H1 (cell line): ENCODE measurements at regions of chr17 and their contacts with region 1.

Region 1: GRCh38 chr17:29293890-29294579 is at the start of gene NUFIP2:
- DNase-seq: peak; percentile 96 to 100
- H3K4me3 ChIP-seq: peak within 1 kb of the TSS; percentile 90 to 99 (median 96)
- H3K27ac ChIP-seq: peak within 1 kb of the TSS; percentile 89
- H3K4me1 ChIP-seq: peaks cover 0 to 2% (median 0%) of the 10 kb centered on the region in 4 experiments; a peak in 1 of 7 replicates
- H3K27me3 ChIP-seq: no peaks in the 10 kb centered on the region; a peak in 1 of 7 replicates
- CTCF ChIP-seq: no peak
- EP300 ChIP-seq: peak in 1 of 2 experiments; percentile 70; a peak in 1 of 3 replicates
- POLR2A ChIP-seq: peak; percentile 99 to 100
- RAD21 ChIP-seq: no peak
- total RNA-seq, gene NUFIP2: 118 TPM in 2 replicates

Region 2: GRCh38 chr17:29252101-29252866 is 41.8 kb before region 1 on chr17:
- CTCF ChIA-PET with region 1: interaction called, 5 read pairs
- POLR2A ChIA-PET with region 1: interaction called, 27 read pairs
- DNase-seq: no peak
- H3K4me3 ChIP-seq: no peak overlapping the region
- H3K27ac ChIP-seq: no peak overlapping the region
- H3K4me1 ChIP-seq: peaks cover 0 to 3% (median 0%) of the 10 kb centered on the region in 4 experiments; a peak in 1 of 7 replicates
- H3K27me3 ChIP-seq: no peaks in the 10 kb centered on the region
- CTCF ChIP-seq: peak in 2 of 3 experiments; percentile 28 to 56; a peak in 2 of 4 replicates
- EP300 ChIP-seq: no peak
- POLR2A ChIP-seq: no peak
- RAD21 ChIP-seq: peak; percentile 37

Region 3: DNA sequence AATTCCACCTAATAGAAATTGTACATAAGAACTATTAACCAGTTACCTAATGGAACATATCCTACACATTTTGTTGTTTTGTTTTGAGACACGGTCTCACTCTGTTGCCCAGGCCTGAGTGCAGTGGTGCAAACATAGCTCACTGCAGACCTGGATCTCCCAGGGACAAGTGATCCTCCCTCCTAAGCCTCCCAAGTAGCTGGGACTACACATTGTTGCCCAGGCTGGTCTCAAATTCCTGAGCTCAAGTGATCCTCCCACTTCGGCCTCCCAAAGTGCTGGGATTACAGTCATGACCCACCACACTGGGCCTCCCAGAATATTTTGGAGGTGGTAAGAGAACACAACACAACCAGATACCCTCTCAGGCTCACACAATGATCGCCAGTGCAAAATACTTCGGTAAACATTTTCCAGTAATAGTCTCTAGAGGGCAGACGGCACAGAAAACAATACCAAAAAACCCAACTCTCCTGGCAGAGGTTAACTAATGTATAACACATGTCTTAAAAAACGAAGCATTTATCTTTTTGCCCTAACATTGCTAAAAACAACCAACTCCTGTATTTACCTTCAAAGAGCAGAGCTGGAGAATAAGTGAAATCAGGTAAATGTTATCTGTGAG is 10.7 kb before region 1 on chr17:
- CTCF ChIA-PET with region 1: interaction called, 23 read pairs
- POLR2A ChIA-PET with region 1: interaction called, 83 read pairs
- DNase-seq: no peak
- H3K4me3 ChIP-seq: peak overlapping the region in 1 of 4 experiments; percentile 1; a peak in 1 of 8 replicates
- H3K27ac ChIP-seq: no peak overlapping the region
- H3K4me1 ChIP-seq: no peaks in the 10 kb centered on the region
- H3K27me3 ChIP-seq: no peaks in the 10 kb centered on the region
- CTCF ChIP-seq: no peak
- EP300 ChIP-seq: no peak
- POLR2A ChIP-seq: no peak
- RAD21 ChIP-seq: no peak

Region 4: DNA sequence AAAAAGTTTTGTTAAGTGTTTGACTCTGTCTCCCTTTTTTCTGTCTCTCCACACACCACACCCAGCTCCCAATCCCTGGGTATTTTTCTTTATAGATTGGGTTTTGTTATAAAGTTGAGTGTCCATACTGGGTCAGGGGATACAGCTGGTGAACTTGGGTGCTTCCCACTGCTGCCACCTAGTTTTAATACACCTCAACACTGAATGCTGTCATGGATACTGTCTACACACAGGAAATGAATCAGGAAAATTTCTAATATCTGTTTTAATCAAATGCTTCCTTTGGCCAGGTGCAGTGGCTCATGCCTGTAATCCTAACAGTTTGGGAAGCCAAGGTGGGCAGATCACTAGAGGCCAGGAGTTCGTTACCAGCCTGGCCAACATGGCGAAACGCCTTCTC is 90.9 kb after region 1 on chr17:
- CTCF ChIA-PET with region 1: no interaction called
- POLR2A ChIA-PET with region 1: interaction called, 10 read pairs
- DNase-seq: no peak
- H3K4me3 ChIP-seq: no peak overlapping the region
- H3K27ac ChIP-seq: no peak overlapping the region
- H3K4me1 ChIP-seq: no peaks in the 10 kb centered on the region; a peak in 1 of 7 replicates
- H3K27me3 ChIP-seq: no peaks in the 10 kb centered on the region
- CTCF ChIP-seq: no peak
- EP300 ChIP-seq: no peak
- POLR2A ChIP-seq: no peak
- RAD21 ChIP-seq: no peak

Region 5: GRCh38 chr17:29753845-29754439 is 459.9 kb after region 1 on chr17:
- CTCF ChIA-PET with region 1: no interaction called
- POLR2A ChIA-PET with region 1: no interaction called
- DNase-seq: no peak
- H3K4me3 ChIP-seq: no peak overlapping the region
- H3K27ac ChIP-seq: no peak overlapping the region
- H3K4me1 ChIP-seq: no peaks in the 10 kb centered on the region
- H3K27me3 ChIP-seq: no peaks in the 10 kb centered on the region
- CTCF ChIP-seq: no peak
- EP300 ChIP-seq: no peak
- POLR2A ChIP-seq: no peak
- RAD21 ChIP-seq: no peak